ENCODE measurements at regions of chr19 and their contacts with region 1.

Region 1: DNA sequence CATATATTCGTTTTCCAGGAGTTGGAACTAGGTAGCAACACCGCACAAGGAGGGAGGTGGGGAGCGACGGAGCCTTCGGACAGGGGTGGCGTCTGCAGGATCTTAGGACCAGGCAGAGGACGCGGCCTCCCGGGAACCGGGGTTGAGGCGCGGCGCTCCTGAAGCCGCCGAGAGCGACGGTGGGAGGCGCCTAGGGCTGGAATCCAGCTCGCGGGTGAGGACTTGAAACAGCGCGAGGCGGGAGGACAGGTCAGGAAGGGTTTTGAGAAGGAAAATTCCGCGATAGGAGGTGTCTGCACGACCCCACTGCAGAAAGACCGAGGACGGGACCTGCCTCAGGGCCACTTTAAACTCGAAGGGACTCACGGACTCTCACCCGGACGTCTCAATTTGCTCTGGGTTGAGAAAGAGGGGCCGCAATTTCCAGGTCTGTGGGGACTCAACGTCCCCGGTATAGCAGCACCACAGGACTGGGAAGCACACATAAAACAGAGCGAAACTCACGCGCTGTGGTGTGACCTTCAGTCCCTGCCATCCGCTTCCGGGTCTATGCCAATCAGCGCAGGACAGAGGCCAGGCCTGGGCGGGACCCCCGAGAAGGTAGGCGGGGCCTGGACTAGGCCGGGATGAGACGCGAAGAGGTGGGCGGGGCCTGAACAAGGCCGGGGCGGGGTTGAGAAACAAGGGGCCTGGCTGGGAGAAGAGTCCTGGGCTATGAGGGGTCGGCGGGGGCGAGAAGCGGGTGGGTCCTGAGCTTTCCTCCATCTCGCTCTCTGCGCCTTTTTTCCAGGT is at the start of gene ZNF320:
- DNase-seq: peak; percentile 92 to 98
- H3K4me3 ChIP-seq: peak within 1 kb of the TSS; percentile 77 to 93
- H3K27ac ChIP-seq: peak within 1 kb of the TSS; percentile 92 to 94
- H3K4me1 ChIP-seq: peaks cover 5 to 10% of the 10 kb centered on the region in 2 donors
- H3K27me3 ChIP-seq: no peaks in the 10 kb centered on the region
- CTCF ChIP-seq: no peak
- total RNA-seq, gene ZNF320: not detected

Region 2: DNA sequence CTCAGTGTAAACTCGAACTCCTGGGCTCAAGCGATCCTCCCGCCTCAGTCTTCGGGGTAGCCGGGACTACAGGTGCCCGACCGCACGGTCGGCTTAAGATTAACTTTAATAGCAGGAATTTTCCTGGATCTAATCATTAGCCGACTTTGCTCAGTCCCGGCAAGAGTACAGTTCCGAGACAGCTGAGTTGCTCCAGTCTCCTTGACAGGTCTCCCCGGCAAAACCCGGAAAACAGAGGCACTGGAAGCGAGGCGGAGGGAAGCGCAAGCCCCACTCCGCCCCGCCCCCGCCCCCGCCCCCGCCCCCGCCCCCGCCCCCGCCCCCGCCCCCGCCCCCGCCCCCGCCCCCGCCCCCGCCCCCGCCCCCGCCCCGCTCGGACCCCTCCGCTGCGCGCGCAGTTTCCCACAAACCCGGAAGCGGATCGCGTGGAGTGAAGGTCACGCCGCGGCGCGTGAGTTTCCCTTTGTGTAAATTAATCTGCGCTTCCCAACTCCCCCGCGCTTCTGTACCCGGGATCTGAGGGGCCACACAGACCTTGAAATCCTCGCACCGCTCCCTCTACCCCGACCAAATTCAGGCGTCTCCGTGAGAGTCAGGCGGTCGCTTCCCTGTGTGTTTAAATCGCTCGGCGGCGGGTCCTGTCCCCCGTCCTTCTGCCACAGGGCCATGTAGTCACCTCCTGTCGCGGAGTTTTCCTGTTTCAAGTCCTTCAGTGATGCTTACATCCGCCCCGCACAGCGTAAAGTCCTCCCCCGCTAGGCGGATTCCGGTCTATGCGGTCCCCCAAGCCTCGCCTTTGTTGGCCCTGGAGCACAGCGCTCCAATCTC is 600.4 kb before region 1 on chr19 and contains the start of gene ZNF480:
- intact Hi-C with region 1: loop called (anchors 2 kb)
- DNase-seq: peak; percentile 26 to 87
- H3K4me3 ChIP-seq: peak within 1 kb of the TSS; percentile 77 to 84
- H3K27ac ChIP-seq: peak within 1 kb of the TSS; percentile 91 to 94
- H3K4me1 ChIP-seq: peaks cover 0 to 4% of the 10 kb centered on the region in 2 donors
- H3K27me3 ChIP-seq: no peaks in the 10 kb centered on the region
- CTCF ChIP-seq: no peak
- total RNA-seq, gene ZNF480: 4.4 TPM

Region 3: GRCh38 chr19:52853880-52854279 is 43.5 kb before region 1 on chr19:
- intact Hi-C with region 1: loop called (anchors 2 kb)
- DNase-seq: no peak
- H3K4me3 ChIP-seq: no peak overlapping the region
- H3K27ac ChIP-seq: no peak overlapping the region
- H3K4me1 ChIP-seq: peaks cover 0 to 3% of the 10 kb centered on the region in 2 donors
- H3K27me3 ChIP-seq: no peaks in the 10 kb centered on the region
- CTCF ChIP-seq: no peak

Region 4: GRCh38 chr19:52922841-52923777 is 25.8 kb after region 1 on chr19 and contains the start of gene ZNF888:
- intact Hi-C with region 1: loop called (anchors 1 kb)
- DNase-seq: peak; percentile 70 to 96
- H3K4me3 ChIP-seq: peak within 1 kb of the TSS; percentile 79 to 83
- H3K27ac ChIP-seq: peak within 1 kb of the TSS; percentile 88 to 91
- H3K4me1 ChIP-seq: peaks cover 0 to 8% of the 10 kb centered on the region in 2 donors
- H3K27me3 ChIP-seq: no peaks in the 10 kb centered on the region
- CTCF ChIP-seq: no peak
- total RNA-seq, gene ZNF888: 0.43 TPM

Region 5: DNA sequence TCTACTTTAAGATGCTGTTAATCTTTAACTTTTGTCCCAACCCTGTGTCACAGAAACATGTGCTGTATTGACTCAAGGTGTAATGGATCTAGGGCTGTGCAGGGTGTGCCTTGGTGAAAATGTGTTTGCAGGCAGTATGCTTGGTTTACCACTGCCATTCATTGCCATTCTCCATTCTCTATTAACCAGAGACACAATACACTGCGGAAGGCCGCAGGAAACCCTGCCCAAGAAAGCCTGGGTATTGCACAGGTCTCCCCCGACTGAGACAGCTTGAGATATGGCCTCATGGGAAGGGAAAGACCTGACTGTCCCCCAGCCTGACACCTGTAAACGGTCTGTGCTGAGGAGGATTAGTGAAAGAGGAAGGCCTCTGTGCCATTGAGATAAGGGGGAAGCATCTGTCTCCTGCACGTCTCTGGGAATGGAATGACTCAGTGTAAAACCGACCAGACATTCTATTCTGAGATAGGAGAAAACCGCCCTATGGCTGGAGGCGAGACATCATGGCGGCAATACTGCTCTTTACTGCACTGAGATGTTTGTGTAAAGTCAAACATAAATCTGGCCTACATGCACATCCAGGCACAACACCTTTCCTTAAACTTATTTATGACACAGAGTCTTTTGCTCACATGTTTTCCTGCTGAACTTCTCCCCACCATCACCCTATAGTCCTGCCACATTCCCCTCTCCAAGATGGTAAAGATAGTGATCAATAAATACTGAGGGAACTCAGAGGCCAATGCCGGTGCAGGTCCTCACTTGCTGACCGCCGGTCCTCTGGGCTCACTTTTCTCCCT is 39.0 kb after region 1 on chr19:
- intact Hi-C with region 1: no loop called
- DNase-seq: no peak
- H3K4me3 ChIP-seq: no peak overlapping the region
- H3K27ac ChIP-seq: no peak overlapping the region
- H3K4me1 ChIP-seq: no peaks in the 10 kb centered on the region
- H3K27me3 ChIP-seq: no peaks in the 10 kb centered on the region
- CTCF ChIP-seq: no peak

Region 6: GRCh38 chr19:52962394-52963246 is 65.3 kb after region 1 on chr19 and contains the start of gene ZNF816:
- intact Hi-C with region 1: loop called (anchors 1 kb)
- DNase-seq: peak; percentile 92 to 99
- H3K4me3 ChIP-seq: peak within 1 kb of the TSS; percentile 71 to 74
- H3K27ac ChIP-seq: peak within 1 kb of the TSS; percentile 81 to 87
- H3K4me1 ChIP-seq: peaks cover 0 to 9% of the 10 kb centered on the region in 2 donors
- H3K27me3 ChIP-seq: no peaks in the 10 kb centered on the region
- CTCF ChIP-seq: no peak
- total RNA-seq, gene ZNF816: 7.1 TPM